Sigmoid colon (tissue), 7 donors: ENCODE measurements at regions of chr17 and their contacts with region 1.

Region 1: DNA sequence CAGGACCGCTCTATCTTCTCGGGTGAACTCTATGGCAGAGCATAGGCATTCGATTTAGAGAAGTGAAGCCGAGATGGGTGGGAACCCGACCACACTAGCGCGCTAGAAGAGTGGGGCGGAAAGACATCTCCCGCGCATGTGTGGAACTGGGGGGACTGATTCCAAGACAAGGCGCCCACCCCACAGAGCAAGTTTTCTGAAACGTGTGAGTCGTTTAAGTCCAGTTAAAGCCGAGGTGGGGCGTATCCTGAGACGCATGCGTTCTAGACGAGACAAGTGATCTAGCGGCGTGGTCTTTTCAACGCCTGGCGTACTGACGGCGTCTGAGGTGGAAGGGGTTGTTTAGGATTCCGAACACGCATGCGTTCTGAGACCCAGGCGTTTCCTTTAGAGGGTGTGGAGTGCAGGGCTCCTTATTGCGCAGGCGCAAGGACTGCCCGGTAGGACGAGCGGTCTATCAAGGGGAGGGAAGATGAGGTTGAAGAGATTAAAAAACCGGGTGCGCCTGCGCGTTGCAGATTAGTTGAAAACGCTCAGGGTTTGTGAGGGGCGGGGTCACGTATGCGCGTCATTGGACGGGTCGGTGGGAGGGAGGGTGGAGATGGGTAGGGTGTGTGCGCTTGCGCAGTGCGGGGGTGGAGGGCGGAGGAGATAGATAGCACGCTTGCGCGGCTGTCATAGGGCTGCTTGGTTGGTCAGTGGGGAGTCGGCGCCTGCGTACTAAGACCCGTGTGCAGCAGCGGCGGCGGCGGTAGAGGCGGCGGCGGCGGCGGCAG is at the start of gene EIF5A:
- DNase-seq: peak; percentile 100
- H3K4me3 ChIP-seq: peak within 1 kb of the TSS; percentile 66 to 100 (median 96)
- H3K27ac ChIP-seq: peak within 1 kb of the TSS; percentile 99 to 100 (median 100)
- H3K4me1 ChIP-seq: peaks cover 0 to 33% (median 27%) of the 10 kb centered on the region in 4 donors
- H3K27me3 ChIP-seq: no peaks in the 10 kb centered on the region
- CTCF ChIP-seq: no peak
- EP300 ChIP-seq: peak in 1 of 4 donors; percentile 48
- POLR2A ChIP-seq: peak; percentile 86 to 94
- total RNA-seq, gene EIF5A: 104 to 156 (median 125) TPM

Region 2: GRCh38 chr17:7239091-7240027 is 67.7 kb before region 1 on chr17 and contains the start of gene PHF23:
- intact Hi-C with region 1: loop called (anchors 5 kb)
- DNase-seq: peak; percentile 100
- H3K4me3 ChIP-seq: peak within 1 kb of the TSS; percentile 95 to 100 (median 100)
- H3K27ac ChIP-seq: peak within 1 kb of the TSS; percentile 98 to 100 (median 99)
- H3K4me1 ChIP-seq: peaks cover 0 to 55% (median 54%) of the 10 kb centered on the region in 4 donors
- H3K27me3 ChIP-seq: no peaks in the 10 kb centered on the region
- CTCF ChIP-seq: no peak
- EP300 ChIP-seq: peak in 1 of 4 donors; percentile 62
- POLR2A ChIP-seq: peak; percentile 61 to 84
- total RNA-seq, gene PHF23: 23.1 to 45.4 (median 35.4) TPM

Region 3: GRCh38 chr17:7261172-7261927 is 45.7 kb before region 1 on chr17:
- intact Hi-C with region 1: loop called (anchors 5 kb)
- DNase-seq: no peak
- H3K4me3 ChIP-seq: peak overlapping the region; percentile 14 to 50 (median 36)
- H3K27ac ChIP-seq: peak overlapping the region in 3 of 4 donors; percentile 15 to 45 (median 18)
- H3K4me1 ChIP-seq: peaks cover 0 to 34% (median 25%) of the 10 kb centered on the region in 4 donors
- H3K27me3 ChIP-seq: peaks cover 28 to 59% (median 55%) of the 10 kb centered on the region in 3 donors
- CTCF ChIP-seq: no peak
- EP300 ChIP-seq: no peak
- POLR2A ChIP-seq: no peak

Region 4: DNA sequence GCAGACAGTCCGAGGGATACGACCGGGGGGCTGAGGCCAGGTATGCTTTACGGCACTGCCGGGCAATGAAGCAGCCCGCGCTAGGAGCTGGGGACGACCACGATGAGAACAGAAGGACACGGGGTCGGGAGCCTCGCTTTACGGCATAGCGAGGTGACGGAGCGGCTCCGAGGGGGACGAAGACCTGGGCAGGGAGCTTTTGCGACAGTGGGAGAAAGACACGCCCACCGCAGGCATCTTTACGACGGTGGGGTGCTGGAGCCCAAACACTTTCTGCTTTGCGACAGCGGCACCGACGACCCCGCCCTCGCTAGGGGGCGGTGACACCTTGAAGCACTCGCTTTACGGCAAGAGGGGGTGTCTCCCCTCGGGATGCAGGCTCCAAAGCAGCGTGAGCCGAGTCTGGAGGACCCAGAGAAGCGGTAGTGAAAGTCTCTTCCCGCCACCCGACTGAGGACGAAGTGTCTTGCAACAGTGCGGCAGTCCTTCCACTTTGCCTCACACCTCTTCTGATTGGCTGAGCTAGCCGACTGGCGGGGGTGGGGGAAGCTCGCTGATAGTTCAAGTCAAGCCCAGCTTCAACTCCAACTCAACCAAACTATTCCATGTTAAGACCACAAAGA is 22.4 kb after region 1 on chr17:
- intact Hi-C with region 1: loop called (anchors 1 kb)
- DNase-seq: peak; percentile 100
- H3K4me3 ChIP-seq: peak overlapping the region; percentile 69 to 93 (median 83)
- H3K27ac ChIP-seq: peak overlapping the region; percentile 88 to 94 (median 94)
- H3K4me1 ChIP-seq: peaks cover 0 to 31% (median 20%) of the 10 kb centered on the region in 4 donors
- H3K27me3 ChIP-seq: no peaks in the 10 kb centered on the region
- CTCF ChIP-seq: no peak
- EP300 ChIP-seq: peak in 1 of 4 donors; percentile 41
- POLR2A ChIP-seq: peak; percentile 88 to 93

Region 5: DNA sequence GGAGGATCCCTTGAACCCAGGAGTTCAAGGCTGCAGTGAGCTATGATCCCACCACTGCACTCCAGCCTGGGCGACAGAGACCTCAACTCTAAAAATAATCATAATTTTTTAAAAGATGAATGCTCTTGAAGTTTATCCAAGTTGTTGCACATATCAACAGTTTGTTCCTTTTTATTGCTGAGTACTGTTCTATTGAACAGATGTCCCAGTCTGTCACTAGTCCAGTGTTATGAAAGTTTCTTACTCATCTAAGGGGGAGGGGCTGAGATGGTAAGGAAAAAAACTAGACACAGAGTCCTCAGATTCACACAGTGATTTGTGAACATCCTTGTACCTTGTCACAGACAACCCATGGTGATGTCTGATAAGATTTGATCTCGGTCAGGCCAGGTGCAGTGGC is 33.1 kb after region 1 on chr17:
- intact Hi-C with region 1: no loop called
- DNase-seq: no peak
- H3K4me3 ChIP-seq: no peak overlapping the region
- H3K27ac ChIP-seq: no peak overlapping the region
- H3K4me1 ChIP-seq: no peaks in the 10 kb centered on the region
- H3K27me3 ChIP-seq: peaks cover 11 to 72% (median 18%) of the 10 kb centered on the region in 3 donors
- CTCF ChIP-seq: no peak
- EP300 ChIP-seq: no peak
- POLR2A ChIP-seq: no peak

Region 6: GRCh38 chr17:7484067-7484918 is 177.2 kb after region 1 on chr17 and contains the start of gene POLR2A:
- intact Hi-C with region 1: loop called (anchors 5 kb)
- DNase-seq: peak; percentile 100
- H3K4me3 ChIP-seq: peak within 1 kb of the TSS; percentile 63 to 72 (median 64)
- H3K27ac ChIP-seq: peak within 1 kb of the TSS; percentile 94 to 100 (median 97)
- H3K4me1 ChIP-seq: peaks cover 0 to 74% (median 61%) of the 10 kb centered on the region in 4 donors
- H3K27me3 ChIP-seq: no peaks in the 10 kb centered on the region
- CTCF ChIP-seq: no peak
- EP300 ChIP-seq: peak in 2 of 4 donors; percentile 29 to 70
- POLR2A ChIP-seq: peak; percentile 100
- total RNA-seq, gene POLR2A: 30.1 to 43.2 (median 36.5) TPM

Region 7: DNA sequence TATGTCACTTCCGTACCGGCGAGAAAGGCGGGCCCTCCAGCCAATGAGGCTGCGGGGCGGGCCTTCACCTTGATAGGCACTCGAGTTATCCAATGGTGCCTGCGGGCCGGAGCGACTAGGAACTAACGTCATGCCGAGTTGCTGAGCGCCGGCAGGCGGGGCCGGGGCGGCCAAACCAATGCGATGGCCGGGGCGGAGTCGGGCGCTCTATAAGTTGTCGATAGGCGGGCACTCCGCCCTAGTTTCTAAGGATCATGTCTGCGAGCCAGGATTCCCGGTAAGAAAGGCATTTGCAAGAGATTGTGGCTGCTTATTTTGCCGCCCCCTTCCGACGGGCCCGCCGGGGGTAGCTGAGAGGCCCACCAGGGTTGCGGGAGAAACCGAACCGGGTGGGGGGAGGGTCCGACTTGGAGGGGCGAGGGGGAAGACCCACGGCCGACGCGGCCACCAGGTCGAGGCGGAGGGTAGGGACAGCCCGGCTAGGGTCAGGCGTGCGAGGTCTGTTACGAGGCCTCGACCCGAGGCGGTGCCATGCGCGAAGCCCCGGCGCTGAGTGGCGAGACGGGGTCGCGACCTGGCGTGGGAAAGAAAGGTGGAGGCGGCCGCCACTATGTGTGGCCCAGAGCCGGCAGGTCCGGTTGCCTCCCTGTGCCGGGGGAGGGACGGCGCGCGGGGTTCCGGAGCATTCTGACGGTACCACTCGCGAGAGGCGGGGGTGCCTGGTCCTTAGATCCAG is 265.7 kb after region 1 on chr17:
- intact Hi-C with region 1: loop called (anchors 5 kb)
- DNase-seq: peak; percentile 100
- H3K4me3 ChIP-seq: peak overlapping the region; percentile 80 to 100 (median 89)
- H3K27ac ChIP-seq: peak overlapping the region; percentile 97 to 100 (median 98)
- H3K4me1 ChIP-seq: peaks cover 0 to 36% (median 34%) of the 10 kb centered on the region in 4 donors
- H3K27me3 ChIP-seq: no peaks in the 10 kb centered on the region
- CTCF ChIP-seq: no peak
- EP300 ChIP-seq: no peak
- POLR2A ChIP-seq: peak; percentile 98 to 99